Ovary (tissue), 10 donors: ENCODE measurements at regions of chr5 and their contacts with region 1.

Region 1: GRCh38 chr5:97388794-97389193 is 205.7 kb upstream of the RIOK2 start:
- DNase-seq: no peak
- H3K4me3 ChIP-seq: no peak overlapping the region
- H3K27ac ChIP-seq: no peak overlapping the region
- H3K4me1 ChIP-seq: no peaks in the 10 kb centered on the region
- H3K27me3 ChIP-seq: no peaks in the 10 kb centered on the region
- CTCF ChIP-seq: no peak
- EP300 ChIP-seq: no peak
- POLR2A ChIP-seq: no peak

Region 2: GRCh38 chr5:97618721-97619120 is 229.9 kb after region 1 on chr5:
- intact Hi-C with region 1: loop called in 1 of 4 experiments (anchors 5 kb)
- DNase-seq: no peak
- H3K4me3 ChIP-seq: no peak overlapping the region
- H3K27ac ChIP-seq: no peak overlapping the region
- H3K4me1 ChIP-seq: no peaks in the 10 kb centered on the region
- H3K27me3 ChIP-seq: no peaks in the 10 kb centered on the region
- CTCF ChIP-seq: no peak
- EP300 ChIP-seq: no peak
- POLR2A ChIP-seq: no peak